ENCODE measurements at regions of chr3 and their contacts with region 1.

Region 1: DNA sequence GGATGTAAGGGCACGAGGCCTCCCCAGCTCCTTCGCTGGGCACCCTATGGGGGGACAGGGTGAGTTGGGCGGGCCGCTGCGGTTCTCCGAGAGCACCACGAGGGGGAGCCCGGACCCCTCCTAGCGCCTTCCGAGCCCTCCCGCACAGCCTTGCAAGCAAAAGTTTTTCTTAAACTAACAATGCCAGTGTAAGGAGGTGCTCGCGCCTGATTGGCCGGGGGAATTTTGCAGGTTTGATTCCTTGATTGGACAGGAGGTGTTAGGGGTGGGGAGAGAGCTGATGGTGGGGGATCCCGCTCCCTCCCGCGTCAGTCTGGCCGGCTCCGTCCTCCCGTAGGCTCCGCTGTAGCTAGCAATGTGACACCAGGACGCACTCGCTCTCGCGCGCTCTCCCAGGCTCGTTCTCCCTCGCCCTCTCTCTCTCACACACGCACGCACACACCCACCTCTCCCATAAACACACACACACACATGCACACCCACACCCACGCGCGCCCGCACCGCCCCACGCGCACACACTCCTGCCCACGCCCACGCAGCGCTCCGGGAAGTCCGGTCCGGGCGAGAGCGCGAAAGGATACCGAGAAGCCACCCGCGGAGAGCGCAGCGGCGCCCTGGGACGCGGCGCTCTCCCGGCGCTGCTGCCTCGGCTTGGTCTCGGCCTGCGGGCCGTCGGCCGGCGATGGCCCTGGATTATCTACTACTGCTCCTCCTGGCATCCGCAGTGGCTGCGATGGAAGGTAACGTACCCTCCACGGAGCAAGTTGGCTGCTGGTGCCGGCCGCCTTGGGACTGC is at the start of gene EPHB1:
- DNase-seq: peak; percentile 83
- ATAC-seq: peak; percentile 98
- H3K4me3 Mint-ChIP-seq: peak within 1 kb of the TSS; percentile 72
- H3K27ac Mint-ChIP-seq: no peak within 1 kb of the TSS
- H3K4me1 Mint-ChIP-seq: peaks cover 5% of the 10 kb centered on the region
- H3K27me3 Mint-ChIP-seq: peaks cover 46% of the 10 kb centered on the region
- CTCF ChIP-seq: peak; percentile 83
- total RNA-seq, gene EPHB1: 0.78 TPM in 1 of 2 experiments, not detected in the other

Region 2: GRCh38 chr3:134852893-134853351 is 57.8 kb after region 1 on chr3:
- CTCF ChIA-PET with region 1: no interaction called
- POLR2A ChIA-PET with region 1: no interaction called
- intact Hi-C with region 1: no loop called
- DNase-seq: peak; percentile 10
- ATAC-seq: peak; percentile 74
- H3K4me3 Mint-ChIP-seq: no peak overlapping the region
- H3K27ac Mint-ChIP-seq: no peak overlapping the region
- H3K4me1 Mint-ChIP-seq: peaks cover 9% of the 10 kb centered on the region
- H3K27me3 Mint-ChIP-seq: no peaks in the 10 kb centered on the region
- CTCF ChIP-seq: no peak

Region 3: DNA sequence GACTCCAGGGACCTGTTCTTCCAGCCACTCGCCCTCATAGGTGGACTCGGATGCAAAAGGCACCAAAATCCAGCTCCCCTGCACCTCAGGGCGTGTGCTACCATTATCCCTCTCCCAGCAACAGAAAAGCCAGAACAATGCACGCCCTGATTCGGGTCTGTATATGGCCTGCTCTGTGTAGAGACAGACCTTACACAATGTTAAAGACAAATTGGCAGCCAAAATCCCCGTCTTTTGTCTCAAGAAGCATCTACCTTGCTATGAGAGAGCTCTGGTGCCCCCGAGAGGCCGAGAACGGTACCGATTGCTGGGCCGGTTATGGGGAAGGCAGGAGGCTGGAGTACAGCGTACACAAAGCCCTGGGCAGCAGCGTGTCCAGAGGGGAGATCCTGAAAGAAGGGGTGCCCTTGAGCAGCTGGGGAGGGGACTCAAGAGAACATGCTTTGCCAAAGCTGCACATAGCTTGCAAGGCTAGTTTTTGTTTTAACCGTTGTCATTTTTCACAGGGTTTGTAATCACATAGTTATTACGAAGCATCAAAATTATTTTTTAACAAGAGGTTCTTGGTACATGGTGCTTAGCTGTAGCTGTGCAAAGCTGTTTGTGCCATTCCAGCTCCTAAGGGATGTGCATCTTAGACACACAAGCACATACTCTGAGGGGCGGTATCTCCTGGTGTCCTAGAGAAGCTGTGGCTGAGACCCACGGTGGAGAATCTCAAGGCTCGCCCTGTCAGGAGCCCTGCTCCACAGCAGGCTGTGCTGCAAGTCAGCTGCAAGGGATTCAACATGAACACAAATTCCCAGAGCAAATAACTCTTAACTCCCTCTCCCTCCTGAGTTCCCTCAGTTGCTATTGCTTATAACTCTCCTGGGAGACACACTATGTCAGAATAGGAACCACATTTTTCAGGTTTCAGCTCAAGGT is 708.9 kb after region 1 on chr3:
- CTCF ChIA-PET with region 1: interaction called, 12 read pairs
- POLR2A ChIA-PET with region 1: no interaction called
- intact Hi-C with region 1: no loop called
- DNase-seq: peak; percentile 53
- ATAC-seq: no peak
- H3K4me3 Mint-ChIP-seq: no peak overlapping the region
- H3K27ac Mint-ChIP-seq: no peak overlapping the region
- H3K4me1 Mint-ChIP-seq: no peaks in the 10 kb centered on the region
- H3K27me3 Mint-ChIP-seq: no peaks in the 10 kb centered on the region
- CTCF ChIP-seq: peak; percentile 38

Region 4: GRCh38 chr3:135895106-135895733 is 1100.1 kb after region 1 on chr3:
- CTCF ChIA-PET with region 1: no interaction called
- POLR2A ChIA-PET with region 1: no interaction called
- intact Hi-C with region 1: loop called (anchors 10 kb)
- DNase-seq: peak; percentile 69
- ATAC-seq: no peak
- H3K4me3 Mint-ChIP-seq: no peak overlapping the region
- H3K27ac Mint-ChIP-seq: no peak overlapping the region
- H3K4me1 Mint-ChIP-seq: no peaks in the 10 kb centered on the region
- H3K27me3 Mint-ChIP-seq: no peaks in the 10 kb centered on the region
- CTCF ChIP-seq: peak; percentile 70

Measured in activated CD8-positive, alpha-beta T cell treated with anti-CD3 and anti-CD28 coated beads for 36 hours (primary cell).